ENCODE measurements at regions of chr10 and their contacts with region 1.

Region 1: GRCh38 chr10:67849331-67850011 is 11.5 kb upstream of the DNAJC12 start:
- DNase-seq: peak; percentile 91

Region 2: GRCh38 chr10:67764012-67764822 is 85.3 kb before region 1 on chr10:
- CTCF ChIA-PET with region 1: no interaction called
- POLR2A ChIA-PET with region 1: no interaction called
- DNase-seq: peak; percentile 84

Region 3: GRCh38 chr10:67837541-67838314 is 11.7 kb before region 1 on chr10 and contains the start of gene DNAJC12:
- CTCF ChIA-PET with region 1: no interaction called
- POLR2A ChIA-PET with region 1: interaction called, 20 read pairs
- DNase-seq: peak; percentile 69

Region 4: DNA sequence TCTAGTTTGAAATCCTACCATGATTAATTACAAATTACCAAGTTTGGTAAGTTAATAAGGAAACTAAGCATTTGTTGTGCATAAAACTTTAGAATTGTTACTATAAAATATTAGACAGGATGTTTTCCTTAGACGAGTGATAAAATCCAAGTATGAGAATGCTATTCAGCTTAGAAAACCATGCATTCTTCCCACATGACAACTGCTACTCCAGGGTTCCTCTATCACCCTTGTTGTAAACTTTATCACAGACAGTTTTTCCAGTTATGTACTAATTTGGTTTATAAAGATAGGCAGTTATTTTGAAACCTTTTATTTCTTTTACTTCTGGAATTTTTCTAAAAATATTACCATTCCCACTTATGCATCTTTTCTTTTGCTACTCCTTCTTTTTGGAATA is 86.9 kb after region 1 on chr10:
- CTCF ChIA-PET with region 1: no interaction called
- POLR2A ChIA-PET with region 1: no interaction called
- DNase-seq: no peak

Region 5: DNA sequence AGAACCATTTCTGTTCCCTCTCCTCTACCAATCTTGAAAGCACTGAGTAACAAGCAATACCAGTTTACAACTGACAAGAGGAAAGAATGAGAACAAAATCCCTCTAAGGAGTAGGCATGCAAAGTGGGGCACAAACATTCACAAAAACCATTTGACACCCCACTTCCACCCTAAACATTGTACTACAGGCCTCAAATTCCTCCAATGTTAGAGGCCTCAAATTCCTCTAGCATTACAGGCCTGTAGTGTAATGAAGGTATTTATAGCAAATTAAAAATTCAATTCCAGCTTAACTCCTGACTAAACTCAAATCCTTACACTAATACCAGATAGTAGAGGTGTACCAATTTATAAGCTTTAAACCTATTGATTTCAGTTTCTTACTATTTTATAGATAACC is 120.4 kb after region 1 on chr10:
- CTCF ChIA-PET with region 1: no interaction called
- POLR2A ChIA-PET with region 1: no interaction called
- DNase-seq: no peak